ENCODE measurements at regions of chr6 and their contacts with region 1.

Region 1: GRCh38 chr6:38570750-38571149 is 69.0 kb downstream of the BTBD9 start:
- DNase-seq: no peak
- H3K4me3 ChIP-seq: no peak overlapping the region
- CTCF ChIP-seq: peak; percentile 7

Region 2: GRCh38 chr6:38034274-38034914 is 536.4 kb before region 1 on chr6:
- CTCF ChIA-PET with region 1: interaction called, 23 read pairs
- POLR2A ChIA-PET with region 1: no interaction called
- DNase-seq: no peak
- H3K4me3 ChIP-seq: no peak overlapping the region
- CTCF ChIP-seq: peak; percentile 61

Region 3: DNA sequence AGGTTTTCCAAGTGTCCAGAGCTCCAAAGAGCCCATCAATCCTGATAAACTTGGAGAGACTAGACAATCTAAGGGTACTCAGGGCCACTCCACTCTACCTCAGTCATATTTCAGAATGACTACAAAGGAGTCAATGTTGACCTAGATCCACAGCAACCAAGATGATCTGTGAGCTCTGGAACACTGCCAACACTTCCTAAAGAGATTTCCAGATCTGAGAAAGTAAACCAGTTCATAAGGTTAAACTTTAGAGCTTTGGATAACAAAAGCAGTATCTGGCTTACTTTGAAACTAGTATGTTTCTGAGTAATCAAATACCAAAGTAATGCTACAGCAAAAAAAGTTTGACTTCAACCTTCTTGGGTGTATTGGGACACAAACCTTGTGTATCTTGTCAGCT is 53.7 kb before region 1 on chr6:
- CTCF ChIA-PET with region 1: interaction called, 12 read pairs
- POLR2A ChIA-PET with region 1: no interaction called
- DNase-seq: no peak
- H3K4me3 ChIP-seq: no peak overlapping the region
- CTCF ChIP-seq: no peak

Region 4: DNA sequence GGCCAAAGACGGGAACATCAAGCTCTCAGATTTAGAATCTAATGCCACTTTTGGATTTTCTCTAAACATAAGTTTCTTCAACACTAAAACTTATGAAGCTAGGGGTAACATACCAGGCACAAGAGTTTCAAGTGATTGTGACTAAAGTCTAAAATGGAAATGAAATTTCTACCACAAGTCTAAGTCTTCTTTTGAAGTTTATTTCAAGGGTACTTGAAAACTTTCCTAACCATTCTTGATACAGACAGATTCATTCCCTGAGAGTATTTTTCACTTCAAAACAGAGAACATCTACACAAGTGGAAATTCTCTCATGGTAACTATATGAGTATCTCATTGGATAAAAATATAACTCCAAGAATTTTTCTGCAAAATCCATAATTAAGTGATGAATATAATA is 12.8 kb after region 1 on chr6:
- CTCF ChIA-PET with region 1: interaction called, 24 read pairs
- POLR2A ChIA-PET with region 1: no interaction called
- DNase-seq: no peak
- H3K4me3 ChIP-seq: no peak overlapping the region
- CTCF ChIP-seq: no peak

Region 5: GRCh38 chr6:38593409-38593808 is 22.7 kb after region 1 on chr6:
- CTCF ChIA-PET with region 1: interaction called, 11 read pairs
- POLR2A ChIA-PET with region 1: no interaction called
- DNase-seq: no peak
- H3K4me3 ChIP-seq: no peak overlapping the region
- CTCF ChIP-seq: no peak

Region 6: DNA sequence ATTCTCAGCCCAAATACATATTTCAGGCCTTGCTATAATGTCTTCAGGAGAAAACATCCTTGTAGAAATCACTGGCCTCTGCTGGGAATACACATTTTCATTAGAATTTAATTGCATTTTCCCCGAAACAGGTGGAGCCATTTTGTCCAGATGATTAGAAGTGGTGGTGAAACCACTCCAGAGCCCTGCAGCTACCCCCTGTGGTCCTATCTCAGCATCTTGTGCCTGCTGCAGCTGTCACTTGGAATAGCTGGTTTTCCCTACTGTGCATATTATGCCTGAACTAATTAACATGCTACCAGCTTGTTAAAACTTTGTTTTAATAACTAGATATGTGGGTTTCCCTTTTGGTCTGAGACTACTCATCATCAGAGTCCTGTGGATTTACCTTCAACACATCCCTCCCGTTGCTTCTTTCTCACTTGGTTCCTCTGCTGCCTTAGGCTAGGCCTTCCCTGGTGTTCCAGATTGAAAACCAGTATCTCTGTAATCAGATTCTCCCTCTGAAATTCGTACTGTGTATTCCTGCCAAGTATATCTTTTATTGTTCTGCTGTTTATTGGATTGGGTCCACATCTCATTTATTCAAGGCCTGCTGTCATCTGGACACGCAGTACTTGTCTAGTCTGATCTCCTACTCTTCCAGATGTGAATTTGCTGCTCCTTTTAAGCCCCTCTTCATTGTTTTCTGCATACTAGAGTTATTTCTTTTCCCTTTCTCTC is 159.6 kb after region 1 on chr6:
- CTCF ChIA-PET with region 1: no interaction called
- POLR2A ChIA-PET with region 1: no interaction called
- DNase-seq: no peak
- H3K4me3 ChIP-seq: no peak overlapping the region
- CTCF ChIP-seq: no peak

Measured in AG04449 (cell line).